Heart left ventricle (tissue), 16 donors: ENCODE measurements at regions of chr11 and their contacts with region 1.

Region 1: GRCh38 chr11:2532704-2533586 is 88.1 kb downstream of the KCNQ1 start:
- DNase-seq: peak; percentile 89 to 95 (median 91)
- ATAC-seq: peak; percentile 77 to 90 (median 82)
- H3K4me3 ChIP-seq: peak overlapping the region in 11 of 12 donors; percentile 6 to 58 (median 32)
- H3K27ac ChIP-seq: peak overlapping the region in 10 of 12 donors; percentile 5 to 70 (median 52)
- H3K4me1 ChIP-seq: peaks cover 0 to 24% (median 17%) of the 10 kb centered on the region in 12 donors
- H3K27me3 ChIP-seq: no peaks in the 10 kb centered on the region
- CTCF ChIP-seq: peak; percentile 98 to 100 (median 99)
- POLR2A ChIP-seq: no peak

Region 2: GRCh38 chr11:2196970-2197770 is 335.8 kb before region 1 on chr11:
- intact Hi-C with region 1: loop called in 5 of 10 experiments (anchors 5 to 10 kb)
- DNase-seq: peak; percentile 67 to 84 (median 75)
- ATAC-seq: peak; percentile 60 to 87 (median 72)
- H3K4me3 ChIP-seq: no peak overlapping the region
- H3K27ac ChIP-seq: no peak overlapping the region
- H3K4me1 ChIP-seq: peaks cover 0 to 6% (median 0%) of the 10 kb centered on the region in 12 donors
- H3K27me3 ChIP-seq: peaks cover 0 to 18% (median 0%) of the 10 kb centered on the region in 9 donors
- CTCF ChIP-seq: peak; percentile 59 to 85 (median 76)
- POLR2A ChIP-seq: no peak

Region 3: GRCh38 chr11:2314525-2315394 is 218.2 kb before region 1 on chr11:
- intact Hi-C with region 1: loop called in 7 of 10 experiments (anchors 5 to 10 kb)
- DNase-seq: peak; percentile 92 to 97 (median 94)
- ATAC-seq: peak; percentile 86 to 91 (median 89)
- H3K4me3 ChIP-seq: peak overlapping the region in 9 of 12 donors; percentile 14 to 34 (median 26)
- H3K27ac ChIP-seq: peak overlapping the region; percentile 69 to 90 (median 86)
- H3K4me1 ChIP-seq: peaks cover 0 to 41% (median 26%) of the 10 kb centered on the region in 12 donors
- H3K27me3 ChIP-seq: no peaks in the 10 kb centered on the region
- CTCF ChIP-seq: no peak
- POLR2A ChIP-seq: no peak

Region 4: DNA sequence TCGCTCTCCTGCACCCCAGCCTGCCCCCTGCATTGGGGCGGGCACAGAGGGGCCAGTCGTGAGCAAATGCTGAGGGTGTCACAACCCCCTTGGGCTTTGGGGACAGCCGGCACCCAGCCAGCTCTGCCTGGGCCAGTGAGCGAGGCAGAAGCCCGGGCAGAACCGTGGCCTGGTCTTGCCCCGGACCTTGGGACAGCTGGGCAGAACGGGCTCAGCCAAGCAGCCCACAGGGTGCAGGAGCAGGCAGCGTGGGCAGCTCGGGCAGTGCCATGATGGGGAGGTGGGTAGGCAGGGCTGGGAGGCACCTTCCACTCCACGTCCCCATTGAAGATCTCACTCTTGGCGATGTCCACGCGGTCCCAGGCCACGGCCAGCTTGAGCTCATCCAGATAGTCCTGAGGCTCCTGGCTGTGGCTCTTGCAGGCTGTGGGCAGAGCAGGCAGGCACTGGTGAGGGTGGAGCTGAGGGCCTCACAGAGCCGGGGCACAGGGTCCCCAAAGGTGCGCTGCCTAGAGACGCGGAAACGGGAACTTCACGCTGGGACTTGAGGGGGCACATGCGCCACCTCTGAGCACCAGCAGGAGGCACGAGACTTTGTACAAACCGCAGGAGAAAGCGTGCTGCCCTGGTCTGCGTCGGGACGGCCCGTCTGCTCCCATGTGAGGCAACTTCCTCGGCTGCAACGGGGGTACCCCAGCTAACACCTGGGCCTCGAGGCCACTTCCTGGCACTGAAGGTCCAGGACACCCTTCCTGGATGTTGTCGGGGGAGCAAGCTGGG is 117.2 kb before region 1 on chr11:
- intact Hi-C with region 1: no loop called
- DNase-seq: peak in 1 of 5 donors; percentile 48
- ATAC-seq: no peak
- H3K4me3 ChIP-seq: no peak overlapping the region
- H3K27ac ChIP-seq: no peak overlapping the region
- H3K4me1 ChIP-seq: peaks cover 0 to 12% (median 0%) of the 10 kb centered on the region in 12 donors
- H3K27me3 ChIP-seq: peaks cover 0 to under 1% (median 0%) of the 10 kb centered on the region in 9 donors
- CTCF ChIP-seq: no peak
- POLR2A ChIP-seq: no peak

Region 5: GRCh38 chr11:2428322-2428795 is 104.6 kb before region 1 on chr11:
- intact Hi-C with region 1: loop called (anchors 1 kb)
- DNase-seq: peak; percentile 67 to 89 (median 78)
- ATAC-seq: peak; percentile 73 to 91 (median 78)
- H3K4me3 ChIP-seq: no peak overlapping the region
- H3K27ac ChIP-seq: no peak overlapping the region
- H3K4me1 ChIP-seq: no peaks in the 10 kb centered on the region
- H3K27me3 ChIP-seq: no peaks in the 10 kb centered on the region
- CTCF ChIP-seq: peak; percentile 71 to 87 (median 84)
- POLR2A ChIP-seq: no peak

Region 6: DNA sequence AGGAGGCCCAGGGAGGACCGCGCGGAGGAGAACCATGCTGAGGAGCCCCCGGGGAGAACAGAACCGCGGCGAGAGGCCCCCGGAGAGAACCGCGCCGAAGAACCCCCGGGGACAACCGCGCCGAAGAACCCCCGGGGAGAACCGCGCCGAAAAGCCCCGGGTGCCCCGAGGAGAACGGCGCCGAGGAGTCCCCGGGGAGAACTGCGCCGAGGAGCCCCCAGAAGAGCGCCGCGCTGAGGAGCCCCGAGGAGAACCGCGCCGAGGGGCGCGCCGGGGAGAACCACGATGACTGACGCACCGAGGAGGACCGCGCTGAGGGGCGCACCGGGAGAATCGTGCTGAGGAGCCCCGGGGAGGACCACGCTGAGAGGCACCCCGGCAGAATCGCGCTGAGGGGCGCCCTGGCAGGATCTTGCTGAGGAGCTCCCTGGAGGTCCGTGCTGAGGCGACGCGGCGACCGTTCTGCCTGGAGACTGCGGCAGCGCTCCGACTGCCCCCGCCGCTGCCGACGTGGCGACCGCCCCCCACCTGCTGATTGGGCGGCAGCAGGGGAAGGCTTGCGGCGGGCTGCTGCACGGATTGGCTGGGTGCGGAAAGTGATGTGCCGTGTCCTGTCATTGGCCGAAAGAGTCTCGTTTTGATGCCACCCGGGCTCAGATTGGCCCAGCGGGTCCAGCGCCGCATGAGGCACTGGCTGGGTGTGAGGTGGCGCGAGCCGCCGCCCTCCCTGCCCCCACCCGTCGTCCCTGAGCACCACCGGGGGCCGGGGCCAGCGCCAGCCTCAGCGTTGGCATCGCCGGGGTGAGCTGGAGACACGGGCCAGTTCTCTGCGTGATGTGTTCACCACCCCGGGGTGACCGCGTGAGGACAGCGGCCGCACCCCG is 166.8 kb after region 1 on chr11 and contains the start of gene KCNQ1OT1:
- intact Hi-C with region 1: no loop called
- DNase-seq: peak; percentile 91 to 93 (median 92)
- ATAC-seq: peak; percentile 94 to 97 (median 96)
- H3K4me3 ChIP-seq: peak within 1 kb of the TSS; percentile 53 to 94 (median 74)
- H3K27ac ChIP-seq: peak within 1 kb of the TSS; percentile 84 to 97 (median 92)
- H3K4me1 ChIP-seq: peaks cover 0 to 32% (median 14%) of the 10 kb centered on the region in 12 donors
- H3K27me3 ChIP-seq: no peaks in the 10 kb centered on the region
- CTCF ChIP-seq: no peak
- POLR2A ChIP-seq: peak; percentile 69 to 96
- total RNA-seq, gene KCNQ1OT1: 0.28 to 0.93 (median 0.40) TPM

Region 7: GRCh38 chr11:2778630-2779498 is 245.9 kb after region 1 on chr11:
- intact Hi-C with region 1: loop called in 1 of 10 experiments (anchors 10 kb)
- DNase-seq: peak; percentile 80 to 94 (median 83)
- ATAC-seq: peak; percentile 86 to 91 (median 88)
- H3K4me3 ChIP-seq: peak overlapping the region in 5 of 12 donors; percentile 20 to 37 (median 32)
- H3K27ac ChIP-seq: peak overlapping the region; percentile 63 to 99 (median 90)
- H3K4me1 ChIP-seq: peaks cover 20 to 49% (median 41%) of the 10 kb centered on the region in 12 donors
- H3K27me3 ChIP-seq: no peaks in the 10 kb centered on the region
- CTCF ChIP-seq: peak in 9 of 12 donors; percentile 16 to 46 (median 35)
- POLR2A ChIP-seq: no peak

Region 8: DNA sequence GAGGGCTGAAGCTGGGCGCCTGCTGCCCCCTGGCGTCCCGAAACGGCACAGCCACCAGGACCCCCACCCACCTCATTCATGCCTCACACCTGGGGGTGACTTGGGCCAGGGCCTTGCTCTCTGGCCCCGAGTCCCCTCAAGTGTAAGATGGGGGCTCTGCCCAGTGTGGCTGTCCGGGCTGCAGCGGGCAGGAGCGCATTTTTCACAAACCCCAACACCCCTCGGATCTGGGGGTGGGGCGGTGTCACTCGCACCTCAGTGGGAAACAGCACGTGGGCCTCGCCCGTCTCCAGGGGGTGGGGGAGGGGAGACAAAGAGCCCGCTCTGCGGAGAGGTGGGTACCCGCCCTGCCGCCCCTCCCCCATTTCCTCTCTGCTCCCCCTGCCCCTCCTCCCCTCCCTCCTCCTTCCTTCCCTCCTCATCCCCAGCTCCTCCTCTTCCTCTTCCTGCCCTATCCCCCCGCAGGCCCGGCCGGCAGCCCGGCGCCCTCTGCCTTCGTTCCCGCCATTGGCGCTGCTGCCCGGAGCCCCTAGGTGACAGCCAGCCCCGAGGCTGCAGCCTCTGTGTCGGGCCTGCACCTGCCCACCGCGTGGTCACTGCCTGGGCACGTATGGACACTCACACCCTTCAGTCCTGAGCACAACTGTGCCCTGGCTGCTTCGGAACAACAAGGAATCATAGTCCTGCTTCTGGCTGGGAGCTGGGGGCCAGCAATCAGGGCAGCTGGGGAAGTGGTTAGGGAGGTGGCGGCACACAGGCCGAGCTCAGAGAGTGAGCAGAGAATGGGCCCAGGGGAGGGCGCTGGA is 359.5 kb after region 1 on chr11:
- intact Hi-C with region 1: loop called (anchors 1 kb)
- DNase-seq: peak; percentile 63 to 84 (median 79)
- ATAC-seq: peak in 3 of 4 donors; percentile 44 to 70 (median 59)
- H3K4me3 ChIP-seq: peak overlapping the region in 11 of 12 donors; percentile 2 to 67 (median 52)
- H3K27ac ChIP-seq: peak overlapping the region in 10 of 12 donors; percentile 33 to 83 (median 50)
- H3K4me1 ChIP-seq: peaks cover 5 to 39% (median 25%) of the 10 kb centered on the region in 12 donors
- H3K27me3 ChIP-seq: peaks cover 0 to 2% (median 0%) of the 10 kb centered on the region in 9 donors
- CTCF ChIP-seq: peak; percentile 87 to 96 (median 92)
- POLR2A ChIP-seq: no peak